ENCODE measurements at regions of chr6 and their contacts with region 1.

Region 1: GRCh38 chr6:16409531-16410441 is 171.4 kb downstream of the GMPR start:
- DNase-seq: peak; percentile 65
- H3K4me3 ChIP-seq: no peak overlapping the region
- H3K27ac ChIP-seq: no peak overlapping the region
- H3K4me1 ChIP-seq: peaks cover 22% of the 10 kb centered on the region
- CTCF ChIP-seq: peak; percentile 92

Region 2: DNA sequence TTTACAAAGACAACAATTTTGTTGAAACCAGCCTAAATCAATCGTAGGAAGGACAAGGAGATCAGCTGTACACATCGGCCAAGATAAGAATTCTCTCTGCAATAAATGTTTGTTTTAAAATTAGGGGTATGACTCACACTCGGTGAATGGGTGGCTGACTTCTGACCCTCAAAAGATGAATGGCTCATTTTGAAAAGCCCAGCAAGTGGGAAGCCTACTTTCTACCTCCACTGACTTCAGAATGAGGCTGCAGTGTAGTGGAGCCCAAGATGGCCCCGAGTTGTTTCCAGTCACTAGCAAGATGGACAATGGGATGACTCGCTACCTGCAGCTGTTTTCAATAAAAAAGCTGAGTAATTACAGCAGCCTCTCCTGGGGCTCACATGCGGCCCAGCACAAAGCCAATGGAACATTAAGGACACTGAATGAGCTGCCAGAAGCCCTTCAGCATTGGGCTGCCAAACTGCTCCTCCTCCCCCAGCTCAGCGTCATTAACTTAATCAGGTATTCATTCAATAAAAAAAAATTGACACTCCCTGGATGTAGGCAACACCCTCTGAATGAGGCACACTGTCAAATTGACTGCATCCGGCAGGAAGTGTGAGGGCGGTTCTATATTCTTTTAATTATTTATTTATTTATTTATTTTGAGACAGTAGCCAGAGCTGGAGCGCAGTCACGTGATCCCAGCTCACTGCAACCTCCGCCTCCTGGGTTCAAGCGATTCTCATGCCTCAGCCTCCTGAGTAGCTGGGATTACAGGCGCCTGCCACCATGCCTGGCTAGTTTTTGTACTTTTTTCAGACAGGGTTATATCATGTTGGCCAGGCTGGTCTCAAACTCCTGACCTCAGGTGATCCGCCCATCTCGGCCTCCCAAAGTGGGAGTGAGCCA is 64.1 kb before region 1 on chr6:
- CTCF ChIA-PET with region 1: no interaction called
- POLR2A ChIA-PET with region 1: no interaction called
- intact Hi-C with region 1: no loop called
- DNase-seq: no peak
- H3K4me3 ChIP-seq: no peak overlapping the region
- H3K27ac ChIP-seq: no peak overlapping the region
- H3K4me1 ChIP-seq: no peaks in the 10 kb centered on the region
- CTCF ChIP-seq: no peak

Region 3: DNA sequence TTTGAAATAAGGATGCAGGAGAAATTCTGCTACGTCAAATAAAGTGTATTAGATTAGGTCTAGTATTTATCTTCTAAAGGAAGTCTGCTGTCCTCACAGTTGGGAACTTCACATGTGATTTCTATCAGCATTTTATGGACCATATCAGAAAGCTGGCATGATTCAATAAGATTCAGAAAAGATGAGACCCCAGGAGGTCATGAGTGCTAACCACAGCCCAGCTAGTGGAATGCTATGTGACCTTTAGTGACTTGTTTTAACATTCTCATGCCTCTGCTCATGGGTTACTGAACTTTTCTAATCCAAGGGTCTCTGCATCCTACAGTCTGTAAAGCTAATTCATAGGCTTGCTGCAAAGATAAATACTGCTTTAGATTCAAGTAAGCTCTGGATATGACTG is 21.3 kb before region 1 on chr6:
- CTCF ChIA-PET with region 1: no interaction called
- POLR2A ChIA-PET with region 1: no interaction called
- intact Hi-C with region 1: no loop called
- DNase-seq: no peak
- H3K4me3 ChIP-seq: no peak overlapping the region
- H3K27ac ChIP-seq: no peak overlapping the region
- H3K4me1 ChIP-seq: no peaks in the 10 kb centered on the region
- CTCF ChIP-seq: no peak

Region 4: GRCh38 chr6:16514249-16514648 is 104.5 kb after region 1 on chr6:
- CTCF ChIA-PET with region 1: interaction called, 4 read pairs
- POLR2A ChIA-PET with region 1: interaction called, 3 read pairs
- intact Hi-C with region 1: loop called (anchors 5 kb)
- DNase-seq: no peak
- H3K4me3 ChIP-seq: no peak overlapping the region
- H3K27ac ChIP-seq: no peak overlapping the region
- H3K4me1 ChIP-seq: no peaks in the 10 kb centered on the region
- CTCF ChIP-seq: peak; percentile 56

Region 5: DNA sequence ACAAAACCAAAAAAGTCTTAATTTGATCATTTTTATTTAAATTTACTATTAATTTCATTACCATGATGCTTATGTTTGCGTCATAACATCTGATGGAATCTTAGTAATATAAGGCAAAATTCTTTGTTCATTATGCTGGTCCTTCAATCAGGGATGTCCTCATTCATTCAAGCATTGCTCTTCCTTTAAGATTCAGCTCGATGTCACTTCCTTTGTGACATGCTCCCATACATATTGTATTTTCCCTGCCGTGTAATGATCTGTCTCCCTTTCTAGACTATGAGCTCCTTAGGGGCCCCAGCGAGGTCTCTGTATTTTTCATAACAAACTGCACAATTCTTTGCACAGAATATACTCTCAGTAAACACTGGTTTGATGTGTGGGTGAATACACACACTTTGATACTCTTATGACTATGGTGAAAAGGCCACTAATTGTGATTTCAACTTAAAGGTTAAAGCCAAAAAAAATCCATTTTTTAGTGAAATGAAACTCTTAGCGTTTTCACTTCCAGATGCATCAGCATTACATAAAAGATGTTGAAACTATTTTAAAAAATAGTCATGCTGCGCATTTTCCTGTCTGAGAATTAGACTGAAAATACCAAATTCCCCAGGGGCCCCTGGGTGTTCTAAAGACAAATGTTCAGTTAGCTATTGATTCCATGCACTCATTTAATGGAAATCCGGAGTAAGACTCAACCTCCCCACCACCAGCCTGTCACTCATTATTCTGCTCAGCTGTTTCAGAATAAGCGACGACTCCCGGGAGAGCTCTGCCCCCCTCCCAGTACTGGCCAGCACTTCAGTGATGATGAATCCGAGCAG is 181.8 kb after region 1 on chr6:
- CTCF ChIA-PET with region 1: no interaction called
- POLR2A ChIA-PET with region 1: interaction called, 3 read pairs
- intact Hi-C with region 1: loop called (anchors 5 kb)
- DNase-seq: peak; percentile 10
- H3K4me3 ChIP-seq: no peak overlapping the region
- H3K27ac ChIP-seq: no peak overlapping the region
- H3K4me1 ChIP-seq: no peaks in the 10 kb centered on the region
- CTCF ChIP-seq: no peak

Region 6: GRCh38 chr6:16761471-16762267 is 351.9 kb after region 1 on chr6:
- CTCF ChIA-PET with region 1: no interaction called
- POLR2A ChIA-PET with region 1: interaction called, 3 read pairs
- intact Hi-C with region 1: loop called (anchors 5 kb)
- DNase-seq: no peak
- H3K4me3 ChIP-seq: no peak overlapping the region
- H3K27ac ChIP-seq: no peak overlapping the region
- H3K4me1 ChIP-seq: no peaks in the 10 kb centered on the region
- CTCF ChIP-seq: no peak

Region 7: GRCh38 chr6:17780061-17780460 is 1370.3 kb after region 1 on chr6:
- CTCF ChIA-PET with region 1: no interaction called
- POLR2A ChIA-PET with region 1: no interaction called
- intact Hi-C with region 1: no loop called
- DNase-seq: no peak
- H3K4me3 ChIP-seq: no peak overlapping the region
- H3K27ac ChIP-seq: no peak overlapping the region
- H3K4me1 ChIP-seq: no peaks in the 10 kb centered on the region
- CTCF ChIP-seq: no peak